Activated CD8-positive, alpha-beta T cell treated with anti-CD3 and anti-CD28 coated beads for 36 hours (primary cell): ENCODE measurements at regions of chr11 and their contacts with region 1.

Region 1: DNA sequence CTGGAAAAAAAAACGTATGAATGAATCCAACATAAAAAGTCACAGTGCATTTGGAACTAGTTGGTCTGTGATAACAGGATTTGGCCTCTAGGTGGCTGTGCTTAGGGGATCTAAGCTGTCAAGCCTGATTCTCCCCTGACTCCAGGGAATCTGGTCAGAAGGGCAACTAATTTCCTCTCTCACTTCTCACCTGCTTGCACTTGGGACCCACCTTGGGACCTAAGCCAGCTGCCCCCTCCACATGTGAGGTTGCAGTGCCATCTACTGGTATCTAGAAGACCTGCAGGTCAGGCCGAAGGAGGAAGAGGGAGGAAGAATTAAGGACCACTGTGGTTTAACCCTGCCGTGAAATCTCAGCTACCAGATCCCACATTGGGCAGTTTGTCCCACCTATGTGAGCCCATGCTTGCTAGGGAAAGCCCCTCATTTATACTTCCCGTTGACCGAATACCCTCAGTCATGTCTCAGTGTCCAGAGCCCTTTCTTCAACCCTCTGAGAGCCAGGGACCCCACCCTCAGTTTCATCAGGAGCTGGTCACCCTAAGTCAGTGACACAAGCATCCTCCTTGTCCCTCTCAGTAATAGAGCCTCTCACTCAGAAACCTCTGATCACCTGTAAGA is 33.2 kb upstream of the CAVIN3 start:
- DNase-seq: peak; percentile 68
- ATAC-seq: peak; percentile 65
- H3K4me3 Mint-ChIP-seq: no peak overlapping the region
- H3K27ac Mint-ChIP-seq: no peak overlapping the region
- H3K4me1 Mint-ChIP-seq: peaks cover 28% of the 10 kb centered on the region
- H3K27me3 Mint-ChIP-seq: no peaks in the 10 kb centered on the region
- CTCF ChIP-seq: peak; percentile 100

Region 2: GRCh38 chr11:6234387-6235107 is 118.9 kb before region 1 on chr11 and contains the start of gene FHIP1B:
- CTCF ChIA-PET with region 1: interaction called, 18 read pairs
- POLR2A ChIA-PET with region 1: no interaction called
- intact Hi-C with region 1: no loop called
- DNase-seq: peak; percentile 100
- ATAC-seq: peak; percentile 94
- H3K4me3 Mint-ChIP-seq: peak within 1 kb of the TSS; percentile 93
- H3K27ac Mint-ChIP-seq: peak within 1 kb of the TSS; percentile 94
- H3K4me1 Mint-ChIP-seq: peaks cover 39% of the 10 kb centered on the region
- H3K27me3 Mint-ChIP-seq: no peaks in the 10 kb centered on the region
- CTCF ChIP-seq: no peak
- total RNA-seq, gene FHIP1B: 14.9 to 15.1 TPM

Region 3: DNA sequence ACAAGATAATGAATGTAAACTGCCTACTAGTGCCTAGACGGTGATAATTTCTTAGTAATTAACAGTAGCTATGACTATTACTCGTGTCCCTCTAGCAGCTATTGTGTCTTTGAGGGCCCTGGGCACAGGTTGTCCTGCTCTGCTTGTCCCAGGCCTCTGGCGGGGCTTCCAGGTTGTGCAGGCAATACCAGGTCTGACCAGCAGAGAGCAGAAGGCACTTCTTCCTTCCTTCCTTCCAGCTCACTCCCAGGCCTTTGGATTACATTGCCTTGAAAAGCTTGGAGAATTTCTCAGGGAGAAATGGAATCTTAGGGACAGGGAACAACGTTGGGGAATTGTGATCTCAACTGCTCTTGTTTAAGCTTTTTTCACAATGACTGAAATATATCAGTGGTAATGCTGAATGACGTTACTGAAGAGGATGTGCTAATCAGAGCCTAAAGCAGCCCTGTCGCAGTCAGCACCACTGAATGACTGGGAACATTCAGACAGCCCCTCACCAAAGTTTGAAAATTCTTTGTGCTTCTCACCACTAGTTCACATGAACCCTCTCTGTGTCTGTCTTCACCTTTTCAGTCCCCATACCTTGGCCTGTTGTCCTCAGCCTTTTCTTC is 102.2 kb before region 1 on chr11:
- CTCF ChIA-PET with region 1: interaction called, 106 read pairs
- POLR2A ChIA-PET with region 1: no interaction called
- intact Hi-C with region 1: loop called (anchors 5 kb)
- DNase-seq: peak; percentile 73
- ATAC-seq: peak; percentile 96
- H3K4me3 Mint-ChIP-seq: no peak overlapping the region
- H3K27ac Mint-ChIP-seq: no peak overlapping the region
- H3K4me1 Mint-ChIP-seq: no peaks in the 10 kb centered on the region
- H3K27me3 Mint-ChIP-seq: no peaks in the 10 kb centered on the region
- CTCF ChIP-seq: peak; percentile 87

Region 4: GRCh38 chr11:6285019-6285418 is 68.5 kb before region 1 on chr11:
- CTCF ChIA-PET with region 1: interaction called, 11 read pairs
- POLR2A ChIA-PET with region 1: no interaction called
- intact Hi-C with region 1: no loop called
- DNase-seq: no peak
- ATAC-seq: no peak
- H3K4me3 Mint-ChIP-seq: no peak overlapping the region
- H3K27ac Mint-ChIP-seq: no peak overlapping the region
- H3K4me1 Mint-ChIP-seq: no peaks in the 10 kb centered on the region
- H3K27me3 Mint-ChIP-seq: peaks cover 45% of the 10 kb centered on the region
- CTCF ChIP-seq: no peak

Region 5: DNA sequence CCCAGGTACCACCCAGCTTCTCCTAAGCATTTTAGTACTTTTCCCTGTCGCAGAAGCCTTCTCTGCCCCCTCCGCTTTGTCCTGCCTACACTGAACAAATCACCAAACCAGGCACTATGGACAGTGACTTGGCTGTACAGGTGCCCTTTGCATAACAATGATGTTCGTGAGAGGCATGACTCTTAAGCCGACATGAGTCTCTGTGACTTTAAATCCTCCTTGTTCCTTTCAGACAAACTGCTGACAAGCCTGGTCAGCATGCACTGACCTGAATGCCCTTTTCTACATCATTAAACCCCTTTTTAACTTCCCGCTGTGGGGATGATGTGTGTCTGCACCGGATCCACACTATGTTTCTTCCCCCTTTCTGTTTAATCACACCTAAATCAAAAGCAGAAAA is 49.8 kb before region 1 on chr11:
- CTCF ChIA-PET with region 1: interaction called, 18 read pairs
- POLR2A ChIA-PET with region 1: no interaction called
- intact Hi-C with region 1: loop called (anchors 5 kb)
- DNase-seq: no peak
- ATAC-seq: no peak
- H3K4me3 Mint-ChIP-seq: no peak overlapping the region
- H3K27ac Mint-ChIP-seq: no peak overlapping the region
- H3K4me1 Mint-ChIP-seq: no peaks in the 10 kb centered on the region
- H3K27me3 Mint-ChIP-seq: peaks cover 19% of the 10 kb centered on the region
- CTCF ChIP-seq: no peak

Region 6: GRCh38 chr11:6321961-6322362 is 31.5 kb before region 1 on chr11:
- CTCF ChIA-PET with region 1: interaction called, 82 read pairs
- POLR2A ChIA-PET with region 1: interaction called, 3 read pairs
- intact Hi-C with region 1: loop called (anchors 1 kb)
- DNase-seq: peak; percentile 35
- ATAC-seq: peak; percentile 50
- H3K4me3 Mint-ChIP-seq: peak overlapping the region; percentile 5
- H3K27ac Mint-ChIP-seq: peak overlapping the region; percentile 80
- H3K4me1 Mint-ChIP-seq: peaks cover 39% of the 10 kb centered on the region
- H3K27me3 Mint-ChIP-seq: peaks cover 35% of the 10 kb centered on the region
- CTCF ChIP-seq: no peak

Region 7: GRCh38 chr11:6389921-6390724 is 36.6 kb after region 1 on chr11 and contains the start of gene SMPD1:
- CTCF ChIA-PET with region 1: no interaction called
- POLR2A ChIA-PET with region 1: no interaction called
- intact Hi-C with region 1: no loop called
- DNase-seq: peak; percentile 95
- ATAC-seq: peak; percentile 83
- H3K4me3 Mint-ChIP-seq: peak within 1 kb of the TSS; percentile 79
- H3K27ac Mint-ChIP-seq: peak within 1 kb of the TSS; percentile 94
- H3K4me1 Mint-ChIP-seq: peaks cover 44% of the 10 kb centered on the region
- H3K27me3 Mint-ChIP-seq: no peaks in the 10 kb centered on the region
- CTCF ChIP-seq: no peak
- total RNA-seq, gene SMPD1: 10.6 to 11.2 TPM

Region 8: GRCh38 chr11:6443269-6444003 is 90.0 kb after region 1 on chr11:
- CTCF ChIA-PET with region 1: interaction called, 15 read pairs
- POLR2A ChIA-PET with region 1: no interaction called
- intact Hi-C with region 1: no loop called
- DNase-seq: peak; percentile 67
- ATAC-seq: peak; percentile 90
- H3K4me3 Mint-ChIP-seq: no peak overlapping the region
- H3K27ac Mint-ChIP-seq: no peak overlapping the region
- H3K4me1 Mint-ChIP-seq: no peaks in the 10 kb centered on the region
- H3K27me3 Mint-ChIP-seq: no peaks in the 10 kb centered on the region
- CTCF ChIP-seq: peak; percentile 96